IMR-90 (cell line): ENCODE measurements at regions of chr7 and their contacts with region 1.

Region 1: GRCh38 chr7:13067036-13067435 is 379.6 kb downstream of the ARL4A start:
- DNase-seq: no peak
- ATAC-seq: peak; percentile 27; the same call in 1 of the 2 replicates
- H3K4me3 ChIP-seq: no peak overlapping the region
- H3K27ac ChIP-seq: no peak overlapping the region
- H3K4me1 ChIP-seq: peaks cover 6% of the 10 kb centered on the region
- H3K27me3 ChIP-seq: no peaks in the 10 kb centered on the region
- CTCF ChIP-seq: no peak
- POLR2A ChIP-seq: no peak
- RAD21 ChIP-seq: no peak

Region 2: DNA sequence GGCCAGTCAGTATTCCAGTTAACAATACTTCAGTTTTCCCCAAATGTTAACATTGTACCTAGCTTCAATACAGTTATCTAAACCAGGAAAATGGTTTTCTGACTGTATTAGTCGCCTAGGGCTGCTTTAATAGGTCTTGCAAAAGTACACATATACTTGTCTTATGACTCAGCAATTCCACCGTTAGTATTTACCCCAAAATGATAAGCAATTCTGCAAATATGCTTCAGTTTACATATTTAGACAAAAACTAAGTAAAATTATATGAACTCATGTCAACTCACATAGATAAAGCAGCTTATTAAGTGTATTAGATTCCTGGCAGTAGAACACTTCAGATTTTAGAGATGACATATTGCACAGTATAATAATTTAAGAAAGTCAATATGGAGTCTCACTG is 16.3 kb before region 1 on chr7:
- CTCF ChIA-PET with region 1: no interaction called
- POLR2A ChIA-PET with region 1: interaction called, 11 read pairs
- dilution Hi-C with region 1: no loop called
- in situ Hi-C with region 1: no loop called
- intact Hi-C with region 1: no loop called
- DNase-seq: peak; percentile 94
- ATAC-seq: peak; percentile 84
- H3K4me3 ChIP-seq: no peak overlapping the region
- H3K27ac ChIP-seq: peak overlapping the region; percentile 89; the same call in 1 of the 2 replicates
- H3K4me1 ChIP-seq: peaks cover 10% of the 10 kb centered on the region
- H3K27me3 ChIP-seq: no peaks in the 10 kb centered on the region
- CTCF ChIP-seq: no peak
- POLR2A ChIP-seq: no peak
- RAD21 ChIP-seq: no peak

Region 3: GRCh38 chr7:13336227-13336626 is 269.2 kb after region 1 on chr7:
- CTCF ChIA-PET with region 1: no interaction called
- POLR2A ChIA-PET with region 1: no interaction called
- dilution Hi-C with region 1: no loop called
- in situ Hi-C with region 1: no loop called
- intact Hi-C with region 1: no loop called
- DNase-seq: peak; percentile 29
- ATAC-seq: peak; percentile 63
- H3K4me3 ChIP-seq: no peak overlapping the region
- H3K27ac ChIP-seq: no peak overlapping the region
- H3K4me1 ChIP-seq: no peaks in the 10 kb centered on the region; the same call in 1 of the 2 replicates
- H3K27me3 ChIP-seq: no peaks in the 10 kb centered on the region
- CTCF ChIP-seq: no peak
- POLR2A ChIP-seq: no peak
- RAD21 ChIP-seq: no peak